ENCODE measurements at regions of chr11 and their contacts with region 1.

Region 1: GRCh38 chr11:45993531-45994001 is 71.1 kb downstream of the LARGE2 start:
- DNase-seq: no peak
- ATAC-seq: no peak; a peak in 1 of 6 replicates
- H3K4me3 ChIP-seq: no peak overlapping the region
- H3K27ac ChIP-seq: no peak overlapping the region
- H3K4me1 ChIP-seq: no peaks in the 10 kb centered on the region
- CTCF ChIP-seq: no peak
- EP300 ChIP-seq: no peak
- POLR2A ChIP-seq: no peak
- RAD21 ChIP-seq: no peak

Region 2: DNA sequence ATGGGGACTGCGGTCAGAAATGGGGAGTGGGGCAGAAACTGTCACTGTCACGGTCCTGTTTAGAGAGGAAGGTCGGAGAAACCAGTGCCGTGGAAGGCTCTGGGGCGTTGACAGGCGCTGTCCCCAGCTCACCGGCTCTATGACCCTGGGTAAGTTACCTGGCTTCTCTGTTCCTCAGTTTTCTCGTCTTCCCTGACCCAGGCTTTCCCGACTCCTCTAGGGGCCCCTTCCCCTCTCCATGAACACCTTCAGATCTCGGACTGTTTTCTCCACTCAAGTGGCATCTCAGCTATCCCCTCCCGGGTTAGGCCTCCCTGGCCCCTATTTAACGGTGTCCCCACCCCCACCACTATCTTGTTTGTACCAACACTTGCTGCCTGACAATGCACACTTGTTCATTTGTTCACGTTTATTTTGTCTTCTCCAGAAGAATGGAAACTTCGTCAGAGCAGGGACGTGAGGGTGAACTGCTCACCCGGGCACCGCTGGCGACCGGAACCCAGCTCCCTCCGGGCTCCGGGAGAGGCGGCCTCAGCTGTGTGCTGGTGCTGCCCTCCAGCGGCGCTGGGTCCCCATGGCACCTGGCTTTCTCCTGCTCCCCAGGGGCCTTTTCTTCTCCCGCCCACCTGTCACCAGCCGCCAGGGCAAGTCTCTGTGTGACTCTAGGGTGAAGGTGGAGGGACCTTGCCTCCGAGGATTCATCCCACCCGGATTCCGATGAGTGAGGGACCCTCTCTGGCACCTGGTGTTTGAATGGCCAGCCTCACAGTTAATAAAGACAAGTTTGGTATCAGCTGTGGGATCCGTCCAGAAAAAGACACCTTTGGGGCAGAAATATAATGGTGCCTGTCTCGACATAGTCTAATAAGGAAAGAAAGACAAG is 221.8 kb before region 1 on chr11:
- CTCF ChIA-PET with region 1: no interaction called
- POLR2A ChIA-PET with region 1: no interaction called
- DNase-seq: peak; percentile 74 to 96
- ATAC-seq: peak; percentile 95 to 98
- H3K4me3 ChIP-seq: peak overlapping the region; percentile 52
- H3K27ac ChIP-seq: peak overlapping the region; percentile 8 to 36; a peak in 1 of 6 replicates
- H3K4me1 ChIP-seq: no peaks in the 10 kb centered on the region
- CTCF ChIP-seq: peak; percentile 87
- EP300 ChIP-seq: no peak
- POLR2A ChIP-seq: no peak
- RAD21 ChIP-seq: peak; percentile 89 to 95

Region 3: DNA sequence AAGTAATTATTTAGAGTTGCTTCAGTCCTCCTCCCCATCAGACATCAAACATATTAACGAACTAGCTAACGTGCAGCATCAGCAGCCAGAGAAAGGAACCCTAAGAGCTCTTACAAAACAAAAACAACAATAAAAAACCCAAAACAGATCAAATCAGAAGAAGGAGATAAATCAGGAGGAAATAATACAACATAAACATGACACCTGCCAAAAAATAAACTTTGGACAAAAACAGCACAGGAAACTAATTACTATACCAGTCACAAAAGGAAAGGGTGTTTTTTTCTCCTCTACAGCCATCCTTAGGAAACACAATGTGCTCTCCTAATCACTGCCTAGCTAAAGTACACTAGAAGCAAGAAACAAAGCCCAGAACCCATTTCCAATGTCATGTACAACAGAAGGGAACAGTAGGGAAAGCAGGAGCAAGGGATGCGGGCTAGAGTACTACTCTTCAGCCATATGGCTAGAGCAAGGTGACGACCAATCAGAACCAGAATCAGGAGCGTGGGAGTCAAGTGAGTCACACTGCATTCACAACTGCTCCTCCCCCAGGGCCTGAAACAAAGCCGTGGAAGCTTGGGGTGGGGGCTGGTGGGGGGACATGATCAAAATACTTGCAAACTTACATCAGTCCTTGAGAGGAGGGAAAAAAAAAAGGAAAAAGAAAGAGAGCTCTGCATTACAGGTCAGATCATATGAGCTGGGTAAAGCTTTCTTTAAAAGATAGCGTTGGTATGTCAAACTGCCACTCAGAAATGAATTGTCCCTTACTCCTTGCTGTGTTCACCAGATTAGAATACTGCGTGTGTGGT is 10.7 kb before region 1 on chr11:
- CTCF ChIA-PET with region 1: interaction called, 12 read pairs
- POLR2A ChIA-PET with region 1: no interaction called
- DNase-seq: peak in 1 of 2 experiments; percentile 11
- ATAC-seq: peak in 1 of 2 experiments; percentile 53; a peak in 3 of 6 replicates
- H3K4me3 ChIP-seq: no peak overlapping the region
- H3K27ac ChIP-seq: no peak overlapping the region
- H3K4me1 ChIP-seq: peaks cover 7% of the 10 kb centered on the region; the same call in 2 of the 3 replicates
- CTCF ChIP-seq: no peak
- EP300 ChIP-seq: no peak
- POLR2A ChIP-seq: no peak
- RAD21 ChIP-seq: no peak

Region 4: GRCh38 chr11:46006418-46007070 is 13.0 kb after region 1 on chr11:
- CTCF ChIA-PET with region 1: interaction called, 16 read pairs
- POLR2A ChIA-PET with region 1: no interaction called
- DNase-seq: peak; percentile 73 to 74
- ATAC-seq: peak; percentile 88 to 94
- H3K4me3 ChIP-seq: no peak overlapping the region
- H3K27ac ChIP-seq: no peak overlapping the region
- H3K4me1 ChIP-seq: peaks cover 4% of the 10 kb centered on the region; the same call in 1 of the 3 replicates
- CTCF ChIP-seq: peak; percentile 82
- EP300 ChIP-seq: no peak
- POLR2A ChIP-seq: no peak
- RAD21 ChIP-seq: peak; percentile 66 to 76

Measured in A549 (cell line).